ENCODE measurements at regions of chr2 and their contacts with region 1.

Region 1: DNA sequence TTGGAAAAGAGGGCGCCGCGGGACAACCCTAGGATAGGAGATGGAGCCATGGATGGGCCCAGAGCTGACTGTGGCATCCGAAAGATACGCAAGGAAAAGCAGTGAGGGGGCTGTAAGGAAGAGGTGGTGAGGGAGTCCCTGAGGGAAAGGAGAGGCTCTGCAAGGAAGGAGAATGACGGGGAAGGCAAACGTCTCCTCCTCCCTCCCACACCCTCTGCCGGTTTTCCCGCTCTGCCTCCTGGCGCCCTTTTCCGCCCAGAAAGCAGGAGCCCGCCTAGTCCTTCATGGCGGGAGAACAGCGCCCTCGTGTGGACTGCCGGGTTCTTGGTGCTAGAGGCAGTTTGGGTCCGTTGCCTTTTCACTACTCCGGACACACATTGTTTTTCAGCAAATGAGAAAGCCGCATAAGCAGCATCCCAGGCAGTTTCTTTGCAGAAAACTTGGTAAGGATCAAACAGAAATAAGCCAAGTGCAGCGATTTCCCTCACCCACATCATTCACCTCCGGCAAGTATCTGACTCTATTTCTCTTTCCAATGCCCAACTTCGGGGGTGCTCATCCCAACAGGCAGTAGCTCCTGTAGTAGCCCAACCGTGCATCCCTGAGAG is 200.4 kb downstream of the INO80D start:
- DNase-seq: peak; percentile 72
- H3K4me3 Mint-ChIP-seq: no peak overlapping the region
- H3K27ac Mint-ChIP-seq: no peak overlapping the region
- H3K4me1 Mint-ChIP-seq: peaks cover 1% of the 10 kb centered on the region
- H3K27me3 Mint-ChIP-seq: peaks cover 9% of the 10 kb centered on the region

Region 2: GRCh38 chr2:205776139-205776538 is 109.5 kb before region 1 on chr2:
- CTCF ChIA-PET with region 1: interaction called, 16 read pairs
- POLR2A ChIA-PET with region 1: no interaction called
- DNase-seq: peak; percentile 48
- H3K4me3 Mint-ChIP-seq: no peak overlapping the region
- H3K27ac Mint-ChIP-seq: no peak overlapping the region
- H3K4me1 Mint-ChIP-seq: no peaks in the 10 kb centered on the region
- H3K27me3 Mint-ChIP-seq: peaks cover 38% of the 10 kb centered on the region

Region 3: GRCh38 chr2:205902056-205902899 is 16.7 kb after region 1 on chr2:
- CTCF ChIA-PET with region 1: no interaction called
- POLR2A ChIA-PET with region 1: no interaction called
- DNase-seq: no peak
- H3K4me3 Mint-ChIP-seq: no peak overlapping the region
- H3K27ac Mint-ChIP-seq: no peak overlapping the region
- H3K4me1 Mint-ChIP-seq: no peaks in the 10 kb centered on the region
- H3K27me3 Mint-ChIP-seq: peaks cover 12% of the 10 kb centered on the region

Region 4: DNA sequence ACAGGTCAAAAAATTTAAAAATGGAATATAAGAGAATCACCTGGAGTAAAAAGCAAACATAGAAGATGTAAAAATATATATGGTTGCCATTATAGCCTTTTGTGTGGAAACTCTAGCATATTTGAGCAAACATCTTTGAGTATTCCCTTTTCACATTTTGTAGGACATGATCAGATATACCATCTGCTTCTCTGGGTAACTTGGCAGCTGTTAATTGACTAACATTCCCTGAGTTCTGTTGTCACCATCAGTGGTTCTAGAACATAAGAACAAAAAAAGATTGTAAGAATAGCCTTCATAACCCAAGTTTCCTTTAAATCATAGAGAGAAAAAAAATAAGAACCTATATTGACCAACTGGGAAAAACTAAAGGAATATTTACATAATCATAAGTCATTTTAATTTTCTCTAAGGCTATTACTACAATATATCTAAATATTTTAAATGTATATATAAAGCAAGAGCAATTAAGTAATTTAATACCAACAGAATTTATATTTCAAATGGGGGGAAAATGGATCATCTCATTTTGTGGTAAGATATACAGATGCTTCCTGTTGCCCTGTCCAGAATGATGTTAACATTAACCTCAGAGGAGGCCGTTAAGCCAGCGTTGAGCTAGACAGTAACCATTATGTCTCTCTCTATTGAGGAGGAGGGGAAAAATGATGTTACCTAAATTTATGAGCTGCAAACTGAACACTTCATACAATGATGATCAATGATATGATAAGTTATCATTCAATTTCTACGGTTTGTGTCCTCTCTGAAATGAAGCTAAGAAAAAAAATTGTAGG is 210.1 kb after region 1 on chr2:
- CTCF ChIA-PET with region 1: no interaction called
- POLR2A ChIA-PET with region 1: no interaction called
- DNase-seq: no peak
- H3K4me3 Mint-ChIP-seq: no peak overlapping the region
- H3K27ac Mint-ChIP-seq: no peak overlapping the region
- H3K4me1 Mint-ChIP-seq: no peaks in the 10 kb centered on the region
- H3K27me3 Mint-ChIP-seq: no peaks in the 10 kb centered on the region